Mammary epithelial cell (primary cell): ENCODE measurements at regions of chr3 and their contacts with region 1.

Region 1: DNA sequence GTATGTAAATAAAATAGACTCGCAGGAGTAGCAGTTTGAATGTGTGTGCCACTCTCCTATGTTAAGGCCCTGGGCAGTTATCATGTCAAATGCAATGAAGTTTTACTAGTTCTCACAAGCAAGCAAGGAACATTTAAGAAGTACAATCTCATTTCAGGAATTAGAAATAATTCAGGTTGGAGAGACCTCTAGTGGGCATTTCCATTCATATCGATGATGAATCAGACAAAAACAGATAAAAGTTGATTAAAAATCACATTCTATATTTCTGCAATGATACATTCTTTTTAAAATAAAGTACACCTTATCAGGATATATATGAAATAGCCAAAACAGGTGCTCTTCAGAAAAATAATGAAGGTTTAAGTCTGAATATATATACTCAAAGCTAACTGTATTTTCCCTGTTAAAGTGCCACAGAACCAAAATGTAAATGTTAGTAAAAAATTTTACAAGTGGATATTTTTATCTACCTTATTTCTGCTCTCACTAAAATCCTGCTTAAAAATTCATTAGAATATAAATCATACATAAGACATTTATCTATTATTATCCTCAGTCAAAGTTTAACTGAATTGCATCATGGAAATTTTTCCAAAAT is 492.4 kb upstream of the FRG2C start:
- DNase-seq: no peak
- H3K4me3 ChIP-seq: no peak overlapping the region
- H3K27ac ChIP-seq: no peak overlapping the region
- H3K4me1 ChIP-seq: no peaks in the 10 kb centered on the region
- H3K27me3 ChIP-seq: peaks cover 2% of the 10 kb centered on the region
- CTCF ChIP-seq: peak; percentile 47 to 49

Region 2: DNA sequence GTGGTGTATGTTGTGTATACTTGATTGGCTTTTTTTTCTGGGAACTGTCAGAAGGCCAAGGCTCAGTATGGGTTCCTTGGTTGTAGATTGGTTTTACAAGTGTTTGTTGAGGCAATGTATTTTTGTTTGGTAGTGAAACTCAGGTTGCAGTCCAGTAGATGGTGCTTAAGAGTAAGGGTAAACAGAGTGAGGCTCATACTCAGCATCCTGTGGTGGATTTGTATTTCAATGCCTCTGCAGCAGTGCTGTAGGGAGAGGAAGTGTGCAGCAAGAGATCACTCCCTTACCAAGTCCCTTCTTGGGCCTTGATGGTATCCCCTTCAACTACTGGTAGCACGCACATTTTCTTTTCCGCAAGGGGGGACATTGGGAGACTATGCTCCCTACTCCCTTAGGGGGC is 128.8 kb before region 1 on chr3:
- CTCF ChIA-PET with region 1: no interaction called
- dilution Hi-C with region 1: no loop called
- in situ Hi-C with region 1: no loop called
- intact Hi-C with region 1: loop called (anchors 5 kb)
- DNase-seq: no peak
- H3K4me3 ChIP-seq: no peak overlapping the region
- H3K27ac ChIP-seq: no peak overlapping the region
- H3K4me1 ChIP-seq: no peaks in the 10 kb centered on the region
- H3K27me3 ChIP-seq: no peaks in the 10 kb centered on the region
- CTCF ChIP-seq: no peak

Region 3: DNA sequence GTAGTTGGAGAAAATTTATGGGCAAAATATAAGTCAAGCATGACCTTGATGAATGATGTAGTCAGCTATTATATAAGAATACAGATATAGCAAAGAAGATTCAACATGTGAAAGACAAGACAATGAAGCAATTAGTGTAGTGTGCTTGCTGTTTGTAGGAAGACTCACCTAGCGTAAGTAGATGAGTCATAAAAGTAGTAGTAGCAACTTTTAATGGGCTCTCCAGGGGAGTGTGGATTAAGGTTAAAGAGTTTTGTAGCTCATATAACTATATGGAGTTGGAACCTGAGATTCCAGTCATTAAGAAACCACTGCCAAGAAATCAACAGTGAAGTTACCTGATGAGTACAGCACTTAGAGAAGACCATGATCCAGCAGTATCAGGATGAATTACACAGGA is 112.6 kb before region 1 on chr3:
- CTCF ChIA-PET with region 1: no interaction called
- dilution Hi-C with region 1: no loop called
- in situ Hi-C with region 1: no loop called
- intact Hi-C with region 1: no loop called
- DNase-seq: peak; percentile 0
- H3K4me3 ChIP-seq: no peak overlapping the region
- H3K27ac ChIP-seq: no peak overlapping the region
- H3K4me1 ChIP-seq: no peaks in the 10 kb centered on the region
- H3K27me3 ChIP-seq: peaks cover 5% of the 10 kb centered on the region
- CTCF ChIP-seq: no peak

Region 4: DNA sequence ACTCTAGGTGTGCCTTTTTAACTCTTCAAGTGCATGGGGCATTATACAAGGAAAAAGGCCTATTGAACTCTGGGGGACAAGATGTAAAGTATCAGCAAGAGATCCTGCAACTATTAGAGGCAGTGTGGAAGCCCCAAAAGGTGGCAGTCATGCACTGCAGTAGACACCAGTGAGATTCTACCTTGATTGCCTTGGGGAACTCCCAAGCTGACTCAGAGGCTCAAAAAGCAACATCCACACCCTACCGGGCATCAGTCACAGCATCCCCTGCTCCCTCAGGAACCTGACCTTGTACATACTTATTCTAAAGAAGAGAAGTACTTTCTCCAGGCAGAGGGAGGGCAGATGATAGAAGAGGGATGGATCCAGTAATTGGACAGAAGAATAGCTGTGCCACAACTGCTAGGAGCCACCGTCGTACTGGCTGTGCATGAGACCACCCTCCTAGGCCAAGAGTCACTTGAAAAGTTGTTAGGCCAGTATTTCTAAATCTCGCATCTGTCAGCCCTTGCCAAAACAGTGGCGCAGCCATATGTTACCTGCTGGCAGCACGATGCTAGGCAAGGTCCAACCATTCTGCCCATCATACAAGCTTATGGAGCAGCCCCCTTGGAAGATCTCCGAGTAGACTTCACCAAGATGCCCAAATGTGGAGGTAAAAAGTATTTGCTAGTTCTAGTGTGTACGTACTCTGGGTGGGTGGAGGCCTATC is 30.7 kb before region 1 on chr3:
- CTCF ChIA-PET with region 1: no interaction called
- dilution Hi-C with region 1: no loop called
- in situ Hi-C with region 1: no loop called
- intact Hi-C with region 1: loop called (anchors 1 kb)
- DNase-seq: peak; percentile 35
- H3K4me3 ChIP-seq: no peak overlapping the region
- H3K27ac ChIP-seq: no peak overlapping the region
- H3K4me1 ChIP-seq: no peaks in the 10 kb centered on the region
- H3K27me3 ChIP-seq: no peaks in the 10 kb centered on the region
- CTCF ChIP-seq: peak in 1 of 2 donors; percentile 19

Region 5: GRCh38 chr3:75341324-75342071 is 169.8 kb after region 1 on chr3:
- CTCF ChIA-PET with region 1: no interaction called
- dilution Hi-C with region 1: no loop called
- in situ Hi-C with region 1: no loop called
- intact Hi-C with region 1: no loop called
- DNase-seq: no peak
- H3K4me3 ChIP-seq: no peak overlapping the region
- H3K27ac ChIP-seq: no peak overlapping the region
- H3K4me1 ChIP-seq: no peaks in the 10 kb centered on the region
- H3K27me3 ChIP-seq: no peaks in the 10 kb centered on the region
- CTCF ChIP-seq: no peak